CD8-positive, alpha-beta T cell (primary cell): ENCODE measurements at regions of chr16 and their contacts with region 1.

Region 1: DNA sequence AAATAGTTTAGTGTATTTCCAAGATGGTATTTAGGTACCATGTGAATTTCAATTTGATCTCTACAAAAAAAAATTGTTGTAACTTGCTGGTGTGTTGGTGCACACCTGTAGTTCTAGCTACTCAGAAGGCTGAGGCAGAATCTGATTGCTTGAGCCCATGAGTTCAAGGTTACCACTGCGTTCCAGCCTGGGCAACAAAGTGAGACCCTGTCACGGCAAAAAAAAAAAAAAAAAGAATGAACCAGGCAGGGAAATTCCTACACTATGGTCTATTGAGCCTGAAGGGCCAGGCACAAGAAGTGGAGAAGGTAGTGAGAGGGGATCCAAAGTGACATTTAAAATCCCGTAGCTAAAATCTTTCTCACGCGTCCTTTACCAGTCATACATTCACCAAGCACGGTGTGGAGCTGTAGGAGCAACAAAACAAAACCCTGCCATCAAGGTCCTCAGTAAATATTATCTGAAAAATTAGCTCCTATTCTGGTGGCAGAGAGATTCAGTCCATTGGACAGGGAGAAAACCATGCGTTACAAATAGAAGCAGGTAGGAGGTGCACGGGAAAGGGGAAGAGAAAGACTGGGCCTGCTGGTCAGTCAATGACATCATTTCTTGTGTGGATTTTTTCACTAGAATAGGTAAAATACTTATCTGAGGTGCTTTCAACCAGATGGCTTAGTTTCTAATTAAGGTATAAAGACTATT is 27.3 kb downstream of the TXNDC11 start:
- DNase-seq: no peak
- ATAC-seq: no peak
- H3K4me3 ChIP-seq: no peak overlapping the region
- H3K4me3 Mint-ChIP-seq: no peak overlapping the region
- H3K27ac ChIP-seq: no peak overlapping the region
- H3K27ac Mint-ChIP-seq: no peak overlapping the region
- H3K4me1 ChIP-seq: no peaks in the 10 kb centered on the region
- H3K4me1 Mint-ChIP-seq: peaks cover 25% of the 10 kb centered on the region
- H3K27me3 ChIP-seq: no peaks in the 10 kb centered on the region
- H3K27me3 Mint-ChIP-seq: no peaks in the 10 kb centered on the region
- CTCF ChIP-seq: no peak

Region 2: DNA sequence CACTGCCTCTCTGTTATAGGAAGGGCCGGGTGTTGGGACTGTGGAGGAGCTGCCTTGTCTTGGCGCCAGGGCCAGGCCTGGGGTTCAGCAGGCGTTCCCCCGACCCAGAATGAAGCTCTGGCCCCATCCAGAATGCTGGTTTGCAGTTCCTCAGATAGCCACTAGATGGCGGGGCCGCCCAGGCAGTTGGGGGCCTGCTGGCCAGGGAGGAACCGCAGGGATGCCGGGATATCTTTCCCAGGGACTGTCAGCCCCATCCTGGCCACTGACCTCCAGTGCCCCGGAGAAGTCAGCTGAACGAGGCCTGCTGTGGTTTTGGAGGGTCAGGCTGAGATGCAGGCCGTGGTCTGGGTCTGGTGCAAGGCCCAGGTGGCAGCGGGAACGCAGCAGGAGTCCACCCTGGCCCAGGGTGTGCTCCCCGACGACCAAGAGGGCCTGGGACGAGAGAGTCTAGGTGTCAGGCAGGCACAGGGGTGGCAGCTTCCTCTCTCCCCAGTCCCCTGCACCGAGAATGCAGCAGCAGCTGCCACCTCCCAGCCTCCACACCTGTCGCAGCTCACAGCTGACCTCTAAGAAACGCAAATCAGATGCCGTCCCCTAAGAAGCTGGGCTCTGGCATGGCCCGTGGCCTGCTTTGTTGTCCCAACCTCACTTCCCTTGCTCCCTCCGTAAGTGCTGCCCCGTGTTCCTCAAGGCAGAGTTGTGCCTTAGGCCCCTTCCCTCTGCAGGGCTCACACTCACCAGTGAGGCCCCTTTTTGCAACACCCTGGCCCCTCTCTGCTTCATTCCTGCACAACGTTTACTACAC is 319.0 kb before region 1 on chr16:
- CTCF ChIA-PET with region 1: interaction called, 29 read pairs
- POLR2A ChIA-PET with region 1: interaction called, 3 read pairs
- intact Hi-C with region 1: loop called (anchors 1 kb)
- DNase-seq: peak; percentile 46 to 78 (median 65)
- ATAC-seq: peak; percentile 85
- H3K4me3 ChIP-seq: no peak overlapping the region
- H3K4me3 Mint-ChIP-seq: no peak overlapping the region
- H3K27ac ChIP-seq: no peak overlapping the region
- H3K27ac Mint-ChIP-seq: no peak overlapping the region
- H3K4me1 ChIP-seq: no peaks in the 10 kb centered on the region
- H3K4me1 Mint-ChIP-seq: no peaks in the 10 kb centered on the region
- H3K27me3 ChIP-seq: no peaks in the 10 kb centered on the region
- H3K27me3 Mint-ChIP-seq: no peaks in the 10 kb centered on the region
- CTCF ChIP-seq: peak; percentile 99

Region 3: GRCh38 chr16:11530171-11530940 is 185.0 kb before region 1 on chr16:
- CTCF ChIA-PET with region 1: interaction called, 127 read pairs
- POLR2A ChIA-PET with region 1: interaction called, 3 read pairs
- intact Hi-C with region 1: loop called (anchors 1 kb)
- DNase-seq: no peak
- ATAC-seq: no peak
- H3K4me3 ChIP-seq: no peak overlapping the region
- H3K4me3 Mint-ChIP-seq: no peak overlapping the region
- H3K27ac ChIP-seq: no peak overlapping the region
- H3K27ac Mint-ChIP-seq: no peak overlapping the region
- H3K4me1 ChIP-seq: no peaks in the 10 kb centered on the region
- H3K4me1 Mint-ChIP-seq: peaks cover 3% of the 10 kb centered on the region
- H3K27me3 ChIP-seq: no peaks in the 10 kb centered on the region
- H3K27me3 Mint-ChIP-seq: no peaks in the 10 kb centered on the region
- CTCF ChIP-seq: no peak

Region 4: DNA sequence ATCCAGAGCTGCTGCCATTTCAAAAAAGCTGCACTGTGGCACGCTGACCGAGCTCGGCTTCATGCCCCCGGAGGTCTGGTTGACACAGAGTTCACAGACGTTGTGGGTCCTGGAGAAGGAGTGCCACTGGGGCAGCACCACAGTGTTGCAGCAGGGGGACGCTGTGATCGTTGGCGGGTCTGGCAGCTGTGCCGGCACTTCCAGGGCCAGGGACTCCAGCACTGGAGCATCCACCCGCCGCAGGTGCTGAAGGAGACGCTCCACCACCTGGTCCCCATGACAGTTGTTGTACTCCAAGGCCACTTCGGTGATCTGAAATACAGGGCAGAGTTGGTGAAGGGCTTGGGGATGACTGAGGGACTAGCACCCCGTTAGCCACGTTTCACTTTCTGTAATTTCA is 23.6 kb before region 1 on chr16:
- CTCF ChIA-PET with region 1: interaction called, 11 read pairs
- POLR2A ChIA-PET with region 1: interaction called, 3 read pairs
- intact Hi-C with region 1: no loop called
- DNase-seq: no peak
- ATAC-seq: no peak
- H3K4me3 ChIP-seq: no peak overlapping the region
- H3K4me3 Mint-ChIP-seq: no peak overlapping the region
- H3K27ac ChIP-seq: no peak overlapping the region
- H3K27ac Mint-ChIP-seq: no peak overlapping the region
- H3K4me1 ChIP-seq: peaks cover 11% of the 10 kb centered on the region
- H3K4me1 Mint-ChIP-seq: peaks cover 28% of the 10 kb centered on the region
- H3K27me3 ChIP-seq: no peaks in the 10 kb centered on the region
- H3K27me3 Mint-ChIP-seq: no peaks in the 10 kb centered on the region
- CTCF ChIP-seq: no peak